ENCODE measurements at regions of chr7 and their contacts with region 1.

Region 1: GRCh38 chr7:25870574-25870973 is 281.4 kb upstream of the NFE2L3 start:
- DNase-seq: no peak
- H3K4me3 ChIP-seq: no peak overlapping the region
- H3K27ac ChIP-seq: no peak overlapping the region
- H3K4me1 ChIP-seq: no peaks in the 10 kb centered on the region
- H3K27me3 ChIP-seq: peaks cover 100% of the 10 kb centered on the region
- CTCF ChIP-seq: no peak

Region 2: DNA sequence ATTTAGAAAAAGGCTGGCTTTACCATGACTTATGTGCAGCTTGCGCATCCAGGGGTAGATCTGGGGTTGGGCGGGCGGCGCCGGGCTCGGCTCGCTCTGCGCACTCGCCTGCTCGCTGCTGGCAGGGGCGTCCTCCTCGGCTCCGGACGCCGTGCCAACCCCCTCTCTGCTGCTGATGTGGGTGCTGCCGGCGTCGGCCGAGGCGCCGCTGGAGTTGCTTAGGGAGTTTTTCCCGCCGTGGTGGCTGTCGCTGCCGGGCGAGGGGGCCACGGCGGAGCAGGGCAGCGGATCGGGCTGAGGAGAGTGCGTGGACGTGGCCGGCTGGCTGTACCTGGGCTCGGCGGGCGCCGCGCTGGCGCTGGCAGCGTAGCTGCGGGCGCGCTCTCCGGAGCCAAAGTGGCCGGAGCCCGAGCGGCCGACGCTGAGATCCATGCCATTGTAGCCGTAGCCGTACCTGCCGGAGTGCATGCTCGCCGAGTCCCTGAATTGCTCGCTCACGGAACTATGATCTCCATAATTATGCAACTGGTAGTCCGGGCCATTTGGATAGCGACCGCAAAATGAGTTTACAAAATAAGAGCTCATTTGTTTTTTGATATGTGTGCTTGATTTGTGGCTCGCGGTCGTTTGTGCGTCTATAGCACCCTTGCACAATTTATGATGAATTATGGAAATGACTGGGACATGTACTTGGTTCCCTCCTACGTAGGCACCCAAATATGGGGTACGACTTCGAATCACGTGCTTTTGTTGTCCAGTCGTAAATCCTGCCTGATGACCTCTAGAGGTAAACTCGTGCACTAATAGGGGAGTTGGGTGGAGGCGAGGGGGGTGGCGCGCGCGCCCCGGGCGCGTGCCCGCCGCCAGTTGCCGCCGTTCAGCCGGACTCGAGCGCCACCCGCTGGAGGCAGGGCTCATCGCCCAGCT is 1272.7 kb after region 1 on chr7 and contains the start of gene HOXA5:
- CTCF ChIA-PET with region 1: no interaction called
- POLR2A ChIA-PET with region 1: no interaction called
- intact Hi-C with region 1: loop called (anchors 5 kb)
- DNase-seq: peak; percentile 44
- H3K4me3 ChIP-seq: peak within 1 kb of the TSS; percentile 30
- H3K27ac ChIP-seq: no peak within 1 kb of the TSS
- H3K4me1 ChIP-seq: peaks cover 16% of the 10 kb centered on the region
- H3K27me3 ChIP-seq: peaks cover 100% of the 10 kb centered on the region
- CTCF ChIP-seq: peak; percentile 72
- total RNA-seq, gene HOXA5: not detected in 2 replicates

Measured in A673 (cell line).